Activated CD4-positive, alpha-beta T cell treated with anti-CD3 and anti-CD28 coated beads for 36 hours (primary cell): ENCODE measurements at regions of chr3 and their contacts with region 1.

Region 1: GRCh38 chr3:125374996-125375941 is at the start of gene ZNF148:
- DNase-seq: peak; percentile 94
- ATAC-seq: peak; percentile 89
- H3K4me3 Mint-ChIP-seq: peak within 1 kb of the TSS; percentile 92
- H3K27ac Mint-ChIP-seq: peak within 1 kb of the TSS; percentile 99
- H3K4me1 Mint-ChIP-seq: peaks cover 36% of the 10 kb centered on the region
- H3K27me3 Mint-ChIP-seq: no peaks in the 10 kb centered on the region
- total RNA-seq, gene ZNF148: 30.3 to 37.7 TPM

Region 2: DNA sequence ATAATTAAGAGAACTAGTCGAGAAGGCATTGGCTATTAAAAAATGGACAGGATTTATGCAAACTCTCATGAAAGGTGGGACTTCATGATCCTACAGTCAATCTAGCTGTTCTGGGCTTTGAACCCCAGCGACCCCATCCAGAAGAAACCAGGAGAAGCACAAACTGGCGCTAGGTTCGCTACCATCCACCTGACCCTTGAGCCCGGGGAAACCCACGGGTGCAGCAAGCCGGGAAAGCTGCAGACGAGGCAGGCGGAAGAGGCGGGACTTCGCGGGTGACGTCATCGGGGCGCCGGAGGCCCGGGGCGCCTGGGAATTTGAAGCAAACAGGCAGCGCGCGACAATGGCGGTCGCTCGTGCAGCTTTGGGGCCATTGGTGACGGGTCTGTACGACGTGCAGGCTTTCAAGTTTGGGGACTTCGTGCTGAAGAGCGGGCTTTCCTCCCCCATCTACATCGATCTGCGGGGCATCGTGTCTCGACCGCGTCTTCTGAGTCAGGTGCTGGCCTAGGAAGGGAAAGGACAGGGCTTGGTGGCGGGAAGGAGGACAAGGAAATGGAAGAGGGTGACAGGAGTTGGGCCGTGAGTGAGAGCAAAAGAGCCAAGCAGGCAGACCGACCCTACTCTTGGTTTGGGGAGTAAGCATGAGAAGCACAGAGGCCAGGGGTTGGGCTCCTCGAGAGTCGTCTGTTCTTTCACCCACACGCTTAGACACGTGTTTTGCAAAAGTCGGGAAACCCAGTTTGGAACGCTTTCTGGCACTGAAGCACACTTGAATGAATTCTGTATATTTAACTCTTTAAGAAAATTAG is 644.9 kb before region 1 on chr3 and contains the start of gene UMPS:
- CTCF ChIA-PET with region 1: no interaction called
- POLR2A ChIA-PET with region 1: no interaction called
- intact Hi-C with region 1: loop called in 1 of 2 experiments (anchors 2 kb)
- DNase-seq: peak; percentile 97
- ATAC-seq: peak; percentile 99
- H3K4me3 Mint-ChIP-seq: peak within 1 kb of the TSS; percentile 100
- H3K27ac Mint-ChIP-seq: peak within 1 kb of the TSS; percentile 100
- H3K4me1 Mint-ChIP-seq: peaks cover 32% of the 10 kb centered on the region
- H3K27me3 Mint-ChIP-seq: peaks cover 7% of the 10 kb centered on the region
- total RNA-seq, gene UMPS: 35.9 to 42.4 TPM

Region 3: GRCh38 chr3:125231895-125232294 is 143.4 kb before region 1 on chr3:
- CTCF ChIA-PET with region 1: no interaction called
- POLR2A ChIA-PET with region 1: no interaction called
- intact Hi-C with region 1: loop called in 1 of 2 experiments (anchors 5 kb)
- DNase-seq: no peak
- ATAC-seq: peak; percentile 92
- H3K4me3 Mint-ChIP-seq: no peak overlapping the region
- H3K27ac Mint-ChIP-seq: peak overlapping the region; percentile 82
- H3K4me1 Mint-ChIP-seq: peaks cover 22% of the 10 kb centered on the region
- H3K27me3 Mint-ChIP-seq: no peaks in the 10 kb centered on the region

Region 4: GRCh38 chr3:125357032-125357658 is 18.1 kb before region 1 on chr3:
- CTCF ChIA-PET with region 1: no interaction called
- POLR2A ChIA-PET with region 1: interaction called, 10 read pairs
- intact Hi-C with region 1: loop called (anchors 1 kb)
- DNase-seq: peak; percentile 80
- ATAC-seq: peak; percentile 95
- H3K4me3 Mint-ChIP-seq: peak overlapping the region; percentile 74
- H3K27ac Mint-ChIP-seq: peak overlapping the region; percentile 84
- H3K4me1 Mint-ChIP-seq: peaks cover 60% of the 10 kb centered on the region
- H3K27me3 Mint-ChIP-seq: no peaks in the 10 kb centered on the region

Region 5: GRCh38 chr3:125594581-125595011 is 219.3 kb after region 1 on chr3:
- CTCF ChIA-PET with region 1: no interaction called
- POLR2A ChIA-PET with region 1: no interaction called
- intact Hi-C with region 1: loop called (anchors 1 to 10 kb)
- DNase-seq: peak; percentile 42
- ATAC-seq: no peak
- H3K4me3 Mint-ChIP-seq: peak overlapping the region; percentile 92
- H3K27ac Mint-ChIP-seq: peak overlapping the region; percentile 91
- H3K4me1 Mint-ChIP-seq: peaks cover 24% of the 10 kb centered on the region
- H3K27me3 Mint-ChIP-seq: no peaks in the 10 kb centered on the region